ENCODE measurements at regions of chr7 and their contacts with region 1.

Region 1: DNA sequence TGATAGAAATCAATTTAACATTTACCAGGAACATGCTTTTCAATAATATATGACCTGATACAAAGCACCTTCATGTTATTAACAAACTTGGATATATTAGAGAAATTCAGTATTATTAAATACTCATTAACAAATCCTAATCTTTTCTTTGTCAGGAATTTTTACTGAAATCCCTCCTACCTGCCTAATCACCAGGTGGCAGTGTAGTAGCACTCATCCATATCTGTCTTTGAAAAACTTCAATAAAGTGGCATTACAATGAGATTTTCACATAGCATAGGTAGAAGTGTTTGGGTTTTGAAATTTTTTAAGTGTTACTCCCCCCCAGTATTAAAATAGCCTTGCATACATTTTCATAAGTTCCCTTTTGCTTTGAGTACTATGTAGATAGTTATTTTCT is 1246.6 kb upstream of the LRRN3 start:
- DNase-seq: peak; percentile 34
- H3K4me3 Mint-ChIP-seq: no peak overlapping the region
- H3K27ac Mint-ChIP-seq: no peak overlapping the region
- H3K4me1 Mint-ChIP-seq: no peaks in the 10 kb centered on the region
- H3K27me3 Mint-ChIP-seq: no peaks in the 10 kb centered on the region
- CTCF ChIP-seq: peak; percentile 33

Region 2: GRCh38 chr7:110129159-110129558 is 284.8 kb after region 1 on chr7:
- CTCF ChIA-PET with region 1: interaction called, 3 read pairs
- intact Hi-C with region 1: loop called (anchors 1 kb)
- DNase-seq: no peak
- H3K4me3 Mint-ChIP-seq: no peak overlapping the region
- H3K27ac Mint-ChIP-seq: no peak overlapping the region
- H3K4me1 Mint-ChIP-seq: no peaks in the 10 kb centered on the region
- H3K27me3 Mint-ChIP-seq: no peaks in the 10 kb centered on the region
- CTCF ChIP-seq: no peak

Region 3: GRCh38 chr7:110442381-110442837 is 598.0 kb after region 1 on chr7:
- CTCF ChIA-PET with region 1: no interaction called
- intact Hi-C with region 1: loop called (anchors 1 kb)
- DNase-seq: peak; percentile 67
- H3K4me3 Mint-ChIP-seq: no peak overlapping the region
- H3K27ac Mint-ChIP-seq: no peak overlapping the region
- H3K4me1 Mint-ChIP-seq: no peaks in the 10 kb centered on the region
- H3K27me3 Mint-ChIP-seq: no peaks in the 10 kb centered on the region
- CTCF ChIP-seq: peak; percentile 54

Region 4: GRCh38 chr7:110607050-110607857 is 762.9 kb after region 1 on chr7:
- CTCF ChIA-PET with region 1: no interaction called
- intact Hi-C with region 1: no loop called
- DNase-seq: no peak
- H3K4me3 Mint-ChIP-seq: no peak overlapping the region
- H3K27ac Mint-ChIP-seq: peak overlapping the region; percentile 14
- H3K4me1 Mint-ChIP-seq: no peaks in the 10 kb centered on the region
- H3K27me3 Mint-ChIP-seq: no peaks in the 10 kb centered on the region
- CTCF ChIP-seq: no peak

Region 5: DNA sequence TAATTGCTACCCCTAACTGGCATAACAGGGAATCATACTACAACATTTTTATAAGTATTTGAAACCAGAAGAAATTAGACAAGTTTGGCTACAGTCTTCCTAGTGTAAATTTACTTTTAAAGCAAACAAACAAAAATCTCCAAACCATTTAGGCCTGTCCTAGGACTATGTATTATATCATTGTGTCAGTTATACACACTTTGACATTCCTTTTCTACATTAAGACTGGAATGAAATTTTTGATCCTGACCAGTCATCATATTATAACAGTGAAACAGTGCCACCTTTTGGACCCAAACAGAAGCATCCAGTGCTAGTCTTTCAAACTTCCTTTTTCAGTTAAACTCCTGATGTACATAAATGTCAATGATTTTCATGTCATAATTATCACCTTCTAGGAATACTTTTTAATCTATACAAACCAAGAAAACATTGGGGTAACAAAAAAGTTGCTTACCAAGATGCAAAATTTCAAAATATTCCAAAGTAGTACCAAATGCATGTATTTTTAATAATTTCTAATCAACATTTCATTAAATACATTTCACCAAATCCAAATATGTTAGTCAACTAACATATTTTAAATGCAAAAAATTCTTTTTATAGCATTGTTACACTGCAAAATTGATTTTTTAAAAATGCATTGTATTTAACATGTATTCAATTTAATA is 1642.2 kb after region 1 on chr7:
- CTCF ChIA-PET with region 1: no interaction called
- intact Hi-C with region 1: loop called (anchors 5 kb)
- DNase-seq: peak; percentile 27
- H3K4me3 Mint-ChIP-seq: no peak overlapping the region
- H3K27ac Mint-ChIP-seq: no peak overlapping the region
- H3K4me1 Mint-ChIP-seq: no peaks in the 10 kb centered on the region
- H3K27me3 Mint-ChIP-seq: no peaks in the 10 kb centered on the region
- CTCF ChIP-seq: peak; percentile 40